ENCODE measurements at regions of chr11 and their contacts with region 1.

Region 1: DNA sequence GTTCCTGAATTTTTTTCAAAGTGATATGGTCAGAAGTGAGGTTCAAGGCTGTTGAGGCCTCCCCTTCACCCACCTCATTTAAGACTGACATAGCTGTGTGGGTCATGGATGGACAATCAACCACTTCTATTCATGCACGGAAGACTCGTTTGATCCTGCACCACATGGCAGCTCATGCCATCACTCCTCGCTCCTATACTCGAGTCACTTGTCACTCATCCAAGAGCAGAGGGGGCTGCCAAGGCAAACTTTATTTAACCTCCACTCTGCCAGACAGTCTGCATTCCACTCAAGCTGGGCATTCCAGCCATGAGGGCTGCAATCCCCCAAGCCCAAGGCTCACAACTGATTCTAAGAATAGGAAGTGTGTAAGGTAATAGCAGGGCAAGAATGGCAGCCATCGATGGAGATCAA is 34.1 kb downstream of the SNX19 start:
- DNase-seq: no peak
- ATAC-seq: no peak
- H3K4me3 ChIP-seq: no peak overlapping the region
- H3K4me3 Mint-ChIP-seq: no peak overlapping the region
- H3K27ac ChIP-seq: no peak overlapping the region
- H3K27ac Mint-ChIP-seq: no peak overlapping the region
- H3K4me1 ChIP-seq: no peaks in the 10 kb centered on the region
- H3K4me1 Mint-ChIP-seq: no peaks in the 10 kb centered on the region
- H3K27me3 ChIP-seq: no peaks in the 10 kb centered on the region
- H3K27me3 Mint-ChIP-seq: no peaks in the 10 kb centered on the region
- CTCF ChIP-seq: no peak

Region 2: GRCh38 chr11:130894322-130895025 is 12.3 kb after region 1 on chr11:
- CTCF ChIA-PET with region 1: interaction called, 16 read pairs
- POLR2A ChIA-PET with region 1: no interaction called
- intact Hi-C with region 1: no loop called
- DNase-seq: peak; percentile 70
- ATAC-seq: peak; percentile 72
- H3K4me3 ChIP-seq: no peak overlapping the region
- H3K4me3 Mint-ChIP-seq: no peak overlapping the region
- H3K27ac ChIP-seq: no peak overlapping the region
- H3K27ac Mint-ChIP-seq: no peak overlapping the region
- H3K4me1 ChIP-seq: no peaks in the 10 kb centered on the region
- H3K4me1 Mint-ChIP-seq: no peaks in the 10 kb centered on the region
- H3K27me3 ChIP-seq: no peaks in the 10 kb centered on the region
- H3K27me3 Mint-ChIP-seq: no peaks in the 10 kb centered on the region
- CTCF ChIP-seq: peak; percentile 95

Region 3: GRCh38 chr11:130915603-130916237 is 33.6 kb after region 1 on chr11:
- CTCF ChIA-PET with region 1: no interaction called
- POLR2A ChIA-PET with region 1: no interaction called
- intact Hi-C with region 1: no loop called
- DNase-seq: no peak
- ATAC-seq: no peak
- H3K4me3 ChIP-seq: peak overlapping the region; percentile 70 to 97 (median 85)
- H3K4me3 Mint-ChIP-seq: peak overlapping the region; percentile 91
- H3K27ac ChIP-seq: peak overlapping the region; percentile 73 to 91
- H3K27ac Mint-ChIP-seq: peak overlapping the region; percentile 90
- H3K4me1 ChIP-seq: peaks cover 12 to 24% of the 10 kb centered on the region in 2 donors
- H3K4me1 Mint-ChIP-seq: peaks cover 41% of the 10 kb centered on the region
- H3K27me3 ChIP-seq: peaks cover 0 to 9% (median 0%) of the 10 kb centered on the region in 4 experiments
- H3K27me3 Mint-ChIP-seq: peaks cover 15% of the 10 kb centered on the region
- CTCF ChIP-seq: no peak